Posterior cingulate gyrus (tissue), 11 donors: ENCODE measurements at regions of chr13 and their contacts with region 1.

Region 1: DNA sequence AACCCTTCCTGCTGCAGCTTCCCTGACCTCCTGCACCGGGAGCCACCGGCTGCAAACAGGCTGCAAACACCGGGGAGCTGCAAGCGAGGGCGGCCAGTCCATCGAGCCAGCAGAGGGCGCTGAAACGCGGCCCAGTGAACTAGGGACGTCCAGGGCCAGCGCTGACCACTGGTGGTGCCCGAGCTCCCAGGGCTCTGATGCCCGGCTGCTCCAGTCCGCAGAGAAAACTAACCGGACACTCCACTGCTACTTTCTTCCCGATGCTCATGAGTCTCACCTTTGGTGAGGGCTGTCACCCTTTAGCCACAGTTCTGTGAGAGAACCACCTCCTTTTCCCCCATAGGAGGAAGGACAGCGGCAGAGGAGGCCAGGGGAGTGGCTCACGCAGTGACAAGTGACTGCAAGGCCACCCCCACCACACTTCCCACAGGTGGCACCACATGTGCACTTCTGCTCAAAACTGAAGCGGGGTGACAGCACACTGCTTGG is 82.8 kb upstream of the MTIF3 start:
- DNase-seq: peak; percentile 57 to 97 (median 86)

Region 2: GRCh38 chr13:27374650-27375049 is 158.5 kb before region 1 on chr13:
- intact Hi-C with region 1: loop called (anchors 10 kb)
- DNase-seq: peak in 5 of 10 donors; percentile 42 to 93 (median 52)

Region 3: DNA sequence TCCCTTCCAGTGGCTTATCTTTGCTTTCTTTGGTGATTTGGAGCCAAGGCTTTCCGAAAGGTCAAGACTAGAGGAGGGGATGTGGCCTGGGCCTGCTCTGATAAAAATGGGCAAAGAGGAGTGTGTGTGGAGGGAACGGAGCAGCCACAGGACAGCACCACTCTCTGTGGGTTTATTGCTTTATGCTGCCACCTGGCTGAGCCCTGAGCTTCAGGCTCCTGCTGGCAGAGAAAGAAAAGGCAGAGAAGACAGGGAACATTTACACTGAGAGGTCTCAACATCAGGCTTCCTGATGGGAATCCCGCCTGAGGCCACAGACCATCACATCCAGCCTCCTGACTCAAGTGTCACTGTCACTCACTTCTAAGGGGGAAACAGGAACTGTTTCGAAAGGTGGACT is 249.9 kb after region 1 on chr13:
- intact Hi-C with region 1: no loop called
- DNase-seq: peak in 6 of 10 donors; percentile 39 to 89 (median 68)